ENCODE measurements at regions of chr1 and their contacts with region 1.

Region 1: DNA sequence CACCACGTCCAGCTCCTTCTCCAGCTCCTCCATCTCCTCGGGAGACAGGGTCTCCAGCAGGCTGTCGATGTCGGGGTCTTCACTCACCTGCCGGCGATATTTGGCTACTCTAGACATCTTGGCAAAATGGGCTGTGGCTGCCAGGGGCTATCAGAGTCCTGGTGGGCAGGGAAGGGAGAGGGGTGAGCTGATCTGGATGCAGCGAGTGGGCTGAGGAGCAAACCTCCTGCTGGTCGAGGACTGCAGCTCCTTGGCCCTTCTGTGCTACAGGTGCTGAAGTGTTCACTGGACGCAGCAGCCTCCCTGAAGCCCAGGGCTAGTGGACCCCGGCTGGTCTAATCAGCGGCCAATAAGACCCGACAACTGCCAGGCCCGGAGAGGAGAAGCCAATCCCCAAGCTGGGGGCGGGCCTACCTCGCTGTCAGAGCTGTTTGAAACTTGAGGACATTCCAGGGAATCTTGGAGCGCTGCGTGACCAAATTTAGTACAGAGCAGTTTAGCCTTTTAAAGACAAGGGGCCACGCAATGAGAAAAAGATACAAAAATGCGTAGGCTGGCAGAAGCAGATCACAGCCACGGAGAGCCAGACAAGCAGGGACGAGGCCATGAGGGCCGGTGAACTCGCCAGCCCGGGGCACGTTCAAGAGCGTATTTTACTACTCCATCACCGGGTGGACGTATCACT is at the start of gene LMOD1:
- DNase-seq: peak; percentile 74 to 84
- H3K4me3 ChIP-seq: peak within 1 kb of the TSS; percentile 48 to 64 (median 58); a peak in 7 of 8 replicates
- H3K27ac ChIP-seq: no peak within 1 kb of the TSS
- H3K4me1 ChIP-seq: peaks cover 7 to 19% (median 10%) of the 10 kb centered on the region in 4 experiments
- H3K27me3 ChIP-seq: peaks cover 0 to 15% (median 13%) of the 10 kb centered on the region in 4 experiments; a peak in 6 of 7 replicates
- CTCF ChIP-seq: no peak
- EP300 ChIP-seq: no peak
- POLR2A ChIP-seq: no peak
- RAD21 ChIP-seq: no peak
- total RNA-seq, gene LMOD1: 0.82 and 1.4 TPM in 2 replicates

Region 2: DNA sequence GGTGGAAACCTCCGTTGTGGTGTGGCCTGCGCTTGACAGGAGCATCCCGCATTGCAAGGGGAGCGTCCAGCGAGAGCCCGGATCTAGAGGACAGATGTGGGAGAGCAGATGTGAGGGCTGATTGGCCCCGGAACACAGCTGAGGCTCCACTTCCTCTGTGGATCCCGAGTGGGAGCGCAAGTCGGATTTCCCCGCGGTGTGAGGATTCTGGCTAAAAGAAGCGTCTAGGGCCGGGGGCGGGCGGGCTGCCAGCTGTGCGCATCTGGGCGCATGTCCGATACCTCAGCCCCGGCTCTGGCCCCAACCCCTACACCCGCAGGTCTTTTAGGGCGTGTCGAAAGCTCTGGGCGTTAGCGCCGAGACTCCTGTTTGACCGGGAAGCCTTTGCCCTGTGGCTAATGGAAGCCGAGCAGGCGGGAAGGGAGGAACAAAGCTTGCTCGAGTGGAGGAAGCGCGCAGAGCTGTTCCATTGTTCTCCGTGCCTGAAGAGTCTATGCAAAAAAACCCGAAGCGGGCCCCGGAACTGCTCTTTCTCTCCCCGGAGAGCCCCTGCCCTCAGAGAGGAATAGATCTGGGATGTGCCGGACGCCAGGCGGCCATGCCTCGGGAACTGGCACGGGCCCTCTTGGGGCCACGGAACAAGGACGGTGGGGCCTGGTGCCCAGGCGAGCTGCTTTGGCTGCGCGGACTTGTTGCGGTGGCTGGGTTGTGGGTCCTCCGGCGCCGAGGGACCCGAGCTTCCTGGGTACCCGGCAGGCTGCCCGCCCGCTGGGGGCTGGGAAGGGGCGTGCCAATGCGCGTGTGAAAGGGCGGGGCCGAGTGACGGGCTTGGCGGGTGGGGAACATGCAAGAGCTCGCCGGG is 296.4 kb before region 1 on chr1:
- CTCF ChIA-PET with region 1: no interaction called
- POLR2A ChIA-PET with region 1: no interaction called
- DNase-seq: peak; percentile 47 to 90
- H3K4me3 ChIP-seq: peak overlapping the region; percentile 67 to 83 (median 70)
- H3K27ac ChIP-seq: no peak overlapping the region
- H3K4me1 ChIP-seq: peaks cover 13 to 33% (median 25%) of the 10 kb centered on the region in 4 experiments
- H3K27me3 ChIP-seq: peaks cover 0 to 22% (median 19%) of the 10 kb centered on the region in 4 experiments; a peak in 5 of 7 replicates
- CTCF ChIP-seq: no peak
- EP300 ChIP-seq: no peak
- POLR2A ChIP-seq: 0 out of 3 replicates have a peak, but pooled peaks of 1 of the 2 experiments have one; percentile 29
- RAD21 ChIP-seq: no peak

Region 3: GRCh38 chr1:201877877-201878401 is 68.4 kb before region 1 on chr1:
- CTCF ChIA-PET with region 1: interaction called, 20 read pairs
- POLR2A ChIA-PET with region 1: interaction called, 7 read pairs
- DNase-seq: peak in 1 of 2 experiments; percentile 69
- H3K4me3 ChIP-seq: no peak overlapping the region
- H3K27ac ChIP-seq: no peak overlapping the region
- H3K4me1 ChIP-seq: peaks cover 0 to 4% (median 0%) of the 10 kb centered on the region in 4 experiments; a peak in 3 of 7 replicates
- H3K27me3 ChIP-seq: no peaks in the 10 kb centered on the region
- CTCF ChIP-seq: peak in 2 of 3 experiments; percentile 57 to 67; a peak in 3 of 4 replicates
- EP300 ChIP-seq: no peak
- POLR2A ChIP-seq: peak in 1 of 2 experiments; percentile 31; a peak in 2 of 3 replicates
- RAD21 ChIP-seq: peak; percentile 68 to 75

Region 4: GRCh38 chr1:201904579-201904978 is 41.8 kb before region 1 on chr1:
- CTCF ChIA-PET with region 1: interaction called, 145 read pairs
- POLR2A ChIA-PET with region 1: interaction called, 5 read pairs
- DNase-seq: no peak
- H3K4me3 ChIP-seq: no peak overlapping the region
- H3K27ac ChIP-seq: no peak overlapping the region
- H3K4me1 ChIP-seq: no peaks in the 10 kb centered on the region
- H3K27me3 ChIP-seq: no peaks in the 10 kb centered on the region; a peak in 1 of 7 replicates
- CTCF ChIP-seq: no peak
- EP300 ChIP-seq: no peak
- POLR2A ChIP-seq: no peak
- RAD21 ChIP-seq: no peak

Region 5: DNA sequence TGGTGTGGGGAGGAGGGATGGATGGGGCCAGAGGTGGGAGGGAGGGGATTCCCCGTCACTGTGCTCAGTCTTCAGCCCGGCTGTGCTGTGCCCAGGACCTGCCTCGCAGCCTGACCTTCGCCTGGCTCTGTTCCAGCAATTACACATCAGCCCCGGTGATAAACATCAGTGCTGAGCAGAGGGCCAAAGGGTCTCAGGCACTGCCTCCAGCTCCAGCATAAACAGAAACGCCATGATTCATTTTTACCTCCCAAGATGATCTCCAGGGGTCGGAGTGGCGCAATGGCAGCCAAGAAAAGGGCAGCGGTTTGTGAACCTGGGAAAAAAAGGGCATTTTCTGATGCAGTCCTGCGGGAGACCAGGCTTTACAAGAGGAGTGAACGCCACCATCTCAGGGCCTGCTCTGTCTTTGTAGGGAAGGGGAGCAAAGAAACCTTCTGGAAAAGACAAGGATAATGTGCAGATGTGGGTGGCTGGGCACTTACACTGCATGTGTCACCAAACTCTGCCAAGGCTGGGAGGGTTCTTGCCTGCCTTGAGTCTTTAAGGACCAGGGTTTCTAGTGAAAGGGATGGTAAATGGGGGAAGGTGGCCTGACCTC is 29.6 kb before region 1 on chr1:
- CTCF ChIA-PET with region 1: interaction called, 13 read pairs
- POLR2A ChIA-PET with region 1: interaction called, 5 read pairs
- DNase-seq: no peak
- H3K4me3 ChIP-seq: no peak overlapping the region
- H3K27ac ChIP-seq: no peak overlapping the region
- H3K4me1 ChIP-seq: peaks cover 0 to 3% (median 1%) of the 10 kb centered on the region in 4 experiments; a peak in 5 of 7 replicates
- H3K27me3 ChIP-seq: no peaks in the 10 kb centered on the region
- CTCF ChIP-seq: no peak
- EP300 ChIP-seq: no peak
- POLR2A ChIP-seq: no peak
- RAD21 ChIP-seq: no peak

Region 6: GRCh38 chr1:201964261-201964660 is 17.9 kb after region 1 on chr1:
- CTCF ChIA-PET with region 1: interaction called, 18 read pairs
- POLR2A ChIA-PET with region 1: interaction called, 4 read pairs
- DNase-seq: no peak
- H3K4me3 ChIP-seq: no peak overlapping the region
- H3K27ac ChIP-seq: no peak overlapping the region
- H3K4me1 ChIP-seq: no peaks in the 10 kb centered on the region
- H3K27me3 ChIP-seq: no peaks in the 10 kb centered on the region
- CTCF ChIP-seq: no peak
- EP300 ChIP-seq: no peak
- POLR2A ChIP-seq: no peak
- RAD21 ChIP-seq: no peak

Measured in H1 (cell line).